Dorsolateral prefrontal cortex (tissue), 120 donors: ENCODE measurements at regions of chr2 and their contacts with region 1.

Region 1: GRCh38 chr2:188291617-188292347 is at the start of gene GULP1:
- DNase-seq: peak; percentile 11 to 78 (median 60)
- H3K4me3 ChIP-seq: peak within 1 kb of the TSS; percentile 51 to 86 (median 74)
- H3K27ac ChIP-seq: peak within 1 kb of the TSS in 56 of 59 donors; percentile 6 to 93 (median 75)
- H3K27me3 ChIP-seq: no peaks in the 10 kb centered on the region
- CTCF ChIP-seq: peak; percentile 19 to 73 (median 58)
- total RNA-seq, gene GULP1: 11.4 to 52.7 (median 28.6) TPM

Region 2: GRCh38 chr2:188158337-188159100 is 133.3 kb before region 1 on chr2:
- intact Hi-C with region 1: no loop called
- DNase-seq: no peak
- H3K4me3 ChIP-seq: no peak overlapping the region
- H3K27ac ChIP-seq: no peak overlapping the region
- H3K27me3 ChIP-seq: no peaks in the 10 kb centered on the region
- CTCF ChIP-seq: no peak

Region 3: GRCh38 chr2:188369365-188369764 is 77.6 kb after region 1 on chr2:
- intact Hi-C with region 1: loop called in 1 of 2 experiments (anchors 5 kb)
- DNase-seq: peak in 1 of 10 donors; percentile 26
- H3K4me3 ChIP-seq: no peak overlapping the region
- H3K27ac ChIP-seq: no peak overlapping the region
- H3K27me3 ChIP-seq: no peaks in the 10 kb centered on the region
- CTCF ChIP-seq: peak; percentile 21 to 84 (median 68)

Region 4: DNA sequence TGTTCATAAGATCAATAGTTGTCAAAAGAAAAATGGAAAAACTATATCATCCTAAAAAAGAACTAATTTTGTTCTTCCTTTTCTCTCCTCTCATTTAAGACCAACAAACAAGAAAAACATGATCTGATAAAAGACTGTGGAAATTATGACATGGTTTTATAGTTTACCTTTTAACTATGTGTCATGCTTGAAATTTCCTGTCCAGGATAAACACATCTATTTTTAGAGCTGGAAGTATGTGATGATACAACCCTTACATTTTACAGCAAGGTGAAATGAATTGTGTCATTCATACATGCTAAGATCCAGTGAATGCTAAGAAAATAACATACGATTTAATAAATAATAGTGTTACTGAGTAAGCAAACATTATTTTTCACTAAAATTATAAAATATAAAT is 89.8 kb after region 1 on chr2:
- intact Hi-C with region 1: loop called in 1 of 2 experiments (anchors 10 kb)
- DNase-seq: no peak
- H3K4me3 ChIP-seq: peak overlapping the region in 2 of 59 donors; percentile 1 to 21
- H3K27ac ChIP-seq: peak overlapping the region in 3 of 59 donors; percentile 18 to 44 (median 27)
- H3K27me3 ChIP-seq: no peaks in the 10 kb centered on the region
- CTCF ChIP-seq: no peak

Region 5: GRCh38 chr2:188506843-188507242 is 215.1 kb after region 1 on chr2:
- intact Hi-C with region 1: loop called in 1 of 2 experiments (anchors 10 kb)
- DNase-seq: no peak
- H3K4me3 ChIP-seq: no peak overlapping the region
- H3K27ac ChIP-seq: no peak overlapping the region
- H3K27me3 ChIP-seq: no peaks in the 10 kb centered on the region
- CTCF ChIP-seq: no peak